ENCODE measurements at regions of chr2 and their contacts with region 1.

Region 1: DNA sequence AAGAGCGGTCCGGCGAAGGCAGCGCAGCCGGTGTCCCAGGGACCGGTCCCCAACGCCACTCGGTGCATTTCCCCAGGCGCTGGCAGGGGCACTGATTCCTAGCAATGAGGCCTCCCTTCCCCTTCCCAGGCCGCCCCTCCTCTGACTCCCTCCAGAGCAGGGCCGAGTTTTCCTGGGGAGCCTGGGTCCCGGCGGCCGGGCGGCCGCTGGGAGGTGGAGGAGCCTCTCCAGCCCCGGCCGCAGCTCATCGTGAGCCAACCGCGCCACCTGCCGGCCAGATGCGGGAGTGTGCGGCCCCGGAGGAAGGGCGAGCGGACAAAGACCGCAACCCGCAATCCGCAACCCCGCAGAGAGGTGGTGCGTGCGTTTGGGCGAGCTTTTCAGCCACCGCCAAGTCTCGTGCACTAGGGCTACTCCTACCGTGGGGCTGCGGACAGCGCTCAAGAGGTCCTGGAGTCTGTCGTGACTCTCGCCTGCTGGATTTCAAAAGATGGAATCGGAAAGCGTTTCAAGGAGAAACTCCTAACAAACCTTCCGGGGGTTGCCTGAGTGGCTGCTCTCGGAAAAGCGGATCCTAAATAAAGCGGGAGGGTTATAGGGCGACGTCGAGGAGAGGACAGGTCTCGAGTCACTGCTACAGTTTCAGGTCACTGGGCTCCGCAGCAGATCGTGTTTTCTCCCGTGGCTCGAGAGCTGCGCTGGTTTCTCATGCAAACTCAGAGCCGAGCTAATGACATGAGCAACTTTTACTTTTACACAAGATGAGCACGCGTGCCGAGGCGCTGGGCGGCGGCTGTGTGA is 1.5 kb upstream of the EPHA4 start:
- DNase-seq: peak; percentile 86 to 87
- ATAC-seq: peak; percentile 44 to 72 (median 58)
- H3K4me3 ChIP-seq: peak overlapping the region; percentile 77
- H3K4me3 Mint-ChIP-seq: peak overlapping the region; percentile 86
- H3K27ac ChIP-seq: no peak overlapping the region
- H3K27ac Mint-ChIP-seq: peak overlapping the region; percentile 61 to 78
- H3K4me1 ChIP-seq: peaks cover 43% of the 10 kb centered on the region
- H3K4me1 Mint-ChIP-seq: peaks cover 30 to 43% of the 10 kb centered on the region in 2 donors
- H3K27me3 ChIP-seq: peaks cover 25% of the 10 kb centered on the region
- H3K27me3 Mint-ChIP-seq: peaks cover 45 to 48% of the 10 kb centered on the region in 2 donors
- CTCF ChIP-seq: peak; percentile 95

Region 2: DNA sequence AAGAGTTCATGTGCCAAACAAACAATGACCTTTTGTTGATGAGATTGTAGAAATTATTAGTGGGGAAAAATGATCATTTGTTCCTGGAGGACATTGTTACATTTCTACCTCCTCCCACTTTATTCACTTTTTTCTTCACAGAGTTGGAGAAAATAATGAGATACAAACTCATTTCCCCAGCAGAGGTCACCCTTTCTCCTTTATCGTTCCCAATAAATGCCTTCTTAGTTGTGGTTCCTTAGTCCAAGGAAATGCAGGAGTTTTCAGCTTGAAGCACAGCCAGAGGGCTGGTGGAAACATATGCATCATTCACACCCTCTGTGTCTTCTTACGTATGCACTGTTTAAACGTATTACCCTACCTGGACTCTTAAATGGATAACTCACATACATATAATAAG is 1837.4 kb before region 1 on chr2:
- intact Hi-C with region 1: loop called (anchors 10 kb)
- DNase-seq: peak in 1 of 2 donors; percentile 33
- ATAC-seq: no peak
- H3K4me3 ChIP-seq: no peak overlapping the region
- H3K4me3 Mint-ChIP-seq: no peak overlapping the region
- H3K27ac ChIP-seq: no peak overlapping the region
- H3K27ac Mint-ChIP-seq: no peak overlapping the region
- H3K4me1 ChIP-seq: no peaks in the 10 kb centered on the region
- H3K4me1 Mint-ChIP-seq: no peaks in the 10 kb centered on the region
- H3K27me3 ChIP-seq: no peaks in the 10 kb centered on the region
- H3K27me3 Mint-ChIP-seq: peaks cover 5 to 31% of the 10 kb centered on the region in 2 donors
- CTCF ChIP-seq: no peak

Region 3: DNA sequence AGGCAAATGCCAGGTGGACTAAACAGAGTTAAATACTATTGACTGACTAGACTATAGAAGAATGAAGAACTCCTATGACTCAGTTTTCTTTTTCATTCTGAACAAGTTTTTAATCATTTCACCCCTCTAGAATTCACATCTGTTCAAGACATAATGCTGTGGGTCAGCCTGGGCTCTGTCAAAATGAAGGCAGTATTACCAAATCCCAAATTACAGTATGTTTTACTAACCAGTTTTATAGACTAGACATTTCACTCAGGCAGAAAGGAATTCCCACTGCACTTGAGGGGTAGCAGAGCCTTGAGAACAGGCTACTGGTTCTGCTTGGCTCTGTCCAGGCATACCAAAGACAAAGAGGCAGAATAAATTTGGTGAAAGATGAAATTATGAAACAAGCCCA is 513.3 kb before region 1 on chr2:
- intact Hi-C with region 1: loop called (anchors 10 kb)
- DNase-seq: no peak
- ATAC-seq: no peak
- H3K4me3 ChIP-seq: no peak overlapping the region
- H3K4me3 Mint-ChIP-seq: no peak overlapping the region
- H3K27ac ChIP-seq: no peak overlapping the region
- H3K27ac Mint-ChIP-seq: no peak overlapping the region
- H3K4me1 ChIP-seq: no peaks in the 10 kb centered on the region
- H3K4me1 Mint-ChIP-seq: peaks cover 0 to 4% of the 10 kb centered on the region in 2 donors
- H3K27me3 ChIP-seq: no peaks in the 10 kb centered on the region
- H3K27me3 Mint-ChIP-seq: peaks cover 2 to 14% of the 10 kb centered on the region in 2 donors
- CTCF ChIP-seq: no peak

Region 4: GRCh38 chr2:221407765-221408164 is 165.9 kb before region 1 on chr2:
- intact Hi-C with region 1: loop called (anchors 5 kb)
- DNase-seq: no peak
- ATAC-seq: peak; percentile 54 to 95 (median 85)
- H3K4me3 ChIP-seq: no peak overlapping the region
- H3K4me3 Mint-ChIP-seq: peak overlapping the region; percentile 75
- H3K27ac ChIP-seq: no peak overlapping the region
- H3K27ac Mint-ChIP-seq: peak overlapping the region; percentile 42 to 77
- H3K4me1 ChIP-seq: peaks cover 17% of the 10 kb centered on the region
- H3K4me1 Mint-ChIP-seq: peaks cover 35 to 41% of the 10 kb centered on the region in 2 donors
- H3K27me3 ChIP-seq: no peaks in the 10 kb centered on the region
- H3K27me3 Mint-ChIP-seq: peaks cover 7 to 30% of the 10 kb centered on the region in 2 donors
- CTCF ChIP-seq: no peak

Region 5: GRCh38 chr2:221465776-221466175 is 107.9 kb before region 1 on chr2:
- intact Hi-C with region 1: loop called (anchors 2 kb)
- DNase-seq: peak; percentile 16 to 32
- ATAC-seq: peak; percentile 67 to 74 (median 73)
- H3K4me3 ChIP-seq: no peak overlapping the region
- H3K4me3 Mint-ChIP-seq: peak overlapping the region; percentile 68
- H3K27ac ChIP-seq: peak overlapping the region; percentile 39
- H3K27ac Mint-ChIP-seq: peak overlapping the region; percentile 71 to 78
- H3K4me1 ChIP-seq: peaks cover 28% of the 10 kb centered on the region
- H3K4me1 Mint-ChIP-seq: peaks cover 62 to 73% of the 10 kb centered on the region in 2 donors
- H3K27me3 ChIP-seq: no peaks in the 10 kb centered on the region
- H3K27me3 Mint-ChIP-seq: no peaks in the 10 kb centered on the region
- CTCF ChIP-seq: no peak

Region 6: GRCh38 chr2:221517696-221518151 is 55.9 kb before region 1 on chr2:
- intact Hi-C with region 1: loop called (anchors 1 kb)
- DNase-seq: peak; percentile 74 to 90
- ATAC-seq: peak; percentile 71 to 87 (median 77)
- H3K4me3 ChIP-seq: peak overlapping the region; percentile 32
- H3K4me3 Mint-ChIP-seq: no peak overlapping the region
- H3K27ac ChIP-seq: peak overlapping the region; percentile 99
- H3K27ac Mint-ChIP-seq: no peak overlapping the region
- H3K4me1 ChIP-seq: peaks cover 44% of the 10 kb centered on the region
- H3K4me1 Mint-ChIP-seq: peaks cover 0 to 5% of the 10 kb centered on the region in 2 donors
- H3K27me3 ChIP-seq: no peaks in the 10 kb centered on the region
- H3K27me3 Mint-ChIP-seq: no peaks in the 10 kb centered on the region
- CTCF ChIP-seq: no peak

Region 7: DNA sequence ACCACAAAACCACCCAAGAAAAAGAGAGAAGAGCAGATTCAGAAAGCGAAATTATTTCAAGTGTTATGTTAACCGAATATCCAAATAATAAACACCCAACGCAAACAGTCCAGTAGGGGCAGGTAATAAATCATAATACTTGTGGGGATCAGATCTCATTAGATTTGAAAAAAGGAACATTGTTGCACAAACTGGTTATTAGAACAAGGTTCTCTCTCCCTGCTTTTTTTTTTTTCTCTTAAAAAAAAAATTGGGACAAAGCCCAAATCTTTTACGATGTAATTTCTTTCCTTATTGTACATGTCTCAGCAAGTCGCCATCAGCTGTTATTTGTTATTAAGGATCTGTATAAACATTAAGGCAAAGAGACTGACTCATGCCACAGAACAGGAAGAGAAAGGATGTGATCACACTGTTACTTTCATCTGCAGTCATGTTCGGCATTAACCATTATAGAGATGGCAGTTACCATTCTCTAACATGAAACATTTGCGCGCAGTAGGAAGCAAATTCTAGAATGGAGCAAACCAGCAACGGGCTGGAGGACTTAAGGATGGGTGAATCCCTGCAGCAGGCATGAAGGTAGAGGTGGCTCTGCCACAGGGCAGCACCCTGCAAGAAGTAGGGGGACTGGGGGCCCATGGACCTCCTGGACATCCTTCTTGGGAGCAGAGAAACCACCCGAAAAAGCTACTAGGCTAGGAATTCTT is 43.5 kb before region 1 on chr2:
- intact Hi-C with region 1: loop called (anchors 5 kb)
- DNase-seq: peak in 1 of 2 donors; percentile 54
- ATAC-seq: peak; percentile 63 to 76 (median 67)
- H3K4me3 ChIP-seq: no peak overlapping the region
- H3K4me3 Mint-ChIP-seq: peak overlapping the region; percentile 90
- H3K27ac ChIP-seq: peak overlapping the region; percentile 81
- H3K27ac Mint-ChIP-seq: peak overlapping the region; percentile 87 to 92
- H3K4me1 ChIP-seq: peaks cover 34% of the 10 kb centered on the region
- H3K4me1 Mint-ChIP-seq: peaks cover 43 to 49% of the 10 kb centered on the region in 2 donors
- H3K27me3 ChIP-seq: no peaks in the 10 kb centered on the region
- H3K27me3 Mint-ChIP-seq: no peaks in the 10 kb centered on the region
- CTCF ChIP-seq: no peak